Endothelial cell of umbilical vein (primary cell): ENCODE measurements at regions of chr11 and their contacts with region 1.

Region 1: DNA sequence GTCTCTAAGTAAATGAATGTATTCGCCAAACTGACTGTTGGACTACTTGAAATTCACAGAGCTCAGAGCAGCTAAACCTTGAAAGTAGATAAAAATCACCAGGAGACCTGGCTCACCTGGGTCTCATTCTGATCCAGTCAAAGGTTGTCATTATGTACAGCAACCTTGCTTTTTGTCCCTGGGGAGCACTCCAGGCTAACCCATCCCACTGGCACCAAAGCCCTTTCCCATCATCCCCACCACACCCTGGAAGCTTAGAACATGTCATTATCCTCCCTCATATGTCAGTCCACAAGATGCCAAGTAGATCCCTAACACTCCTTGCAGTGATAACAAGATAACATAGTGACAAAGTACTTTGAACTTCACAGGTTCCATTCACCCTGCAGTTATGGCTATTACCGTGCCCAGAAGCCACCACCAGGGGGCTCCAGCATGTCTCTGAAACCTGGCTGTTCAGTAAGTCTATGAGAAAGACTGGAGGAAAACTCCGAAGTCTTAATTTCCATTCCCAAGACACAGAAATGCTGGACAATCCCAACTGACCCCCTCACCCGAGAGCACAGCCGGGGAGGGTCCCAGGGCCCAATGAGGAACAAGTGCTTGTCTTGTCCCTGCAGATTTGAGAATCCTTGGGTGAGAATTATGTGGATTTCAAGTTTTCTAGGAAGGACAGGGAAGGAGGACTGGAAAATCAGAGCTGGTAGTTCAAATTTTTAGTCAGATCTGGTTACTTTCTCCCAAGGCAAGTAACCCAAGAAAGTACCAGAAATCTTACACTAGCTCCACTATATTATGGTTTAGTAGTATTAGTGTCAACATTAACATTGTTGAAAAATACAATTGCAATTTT is 43.0 kb upstream of the USP47 start:
- DNase-seq: peak; percentile 76
- H3K4me3 ChIP-seq: no peak overlapping the region
- H3K27ac ChIP-seq: no peak overlapping the region
- H3K4me1 ChIP-seq: no peaks in the 10 kb centered on the region
- H3K27me3 ChIP-seq: peaks cover 24 to 28% of the 10 kb centered on the region in 2 experiments
- CTCF ChIP-seq: peak; percentile 86 to 87
- POLR2A ChIP-seq: no peak

Region 2: GRCh38 chr11:11841723-11842420 is 43.1 kb after region 1 on chr11 and contains the start of gene USP47:
- CTCF ChIA-PET with region 1: interaction called, 5 read pairs
- POLR2A ChIA-PET with region 1: no interaction called
- dilution Hi-C with region 1: no loop called
- intact Hi-C with region 1: loop called (anchors 1 kb)
- DNase-seq: peak; percentile 87
- H3K4me3 ChIP-seq: peak within 1 kb of the TSS; percentile 81 to 97 (median 86)
- H3K27ac ChIP-seq: peak within 1 kb of the TSS; percentile 95
- H3K4me1 ChIP-seq: peaks cover 22% of the 10 kb centered on the region
- H3K27me3 ChIP-seq: no peaks in the 10 kb centered on the region
- CTCF ChIP-seq: peak; percentile 44 to 55
- POLR2A ChIP-seq: peak; percentile 97
- total RNA-seq, gene USP47: 38.0 and 41.5 TPM in 2 replicates

Region 3: GRCh38 chr11:11848891-11849746 is 50.3 kb after region 1 on chr11:
- CTCF ChIA-PET with region 1: interaction called, 7 read pairs
- POLR2A ChIA-PET with region 1: interaction called, 3 read pairs
- dilution Hi-C with region 1: no loop called
- intact Hi-C with region 1: loop called (anchors 1 kb)
- DNase-seq: peak; percentile 64
- H3K4me3 ChIP-seq: no peak overlapping the region
- H3K27ac ChIP-seq: no peak overlapping the region
- H3K4me1 ChIP-seq: peaks cover 13% of the 10 kb centered on the region
- H3K27me3 ChIP-seq: no peaks in the 10 kb centered on the region
- CTCF ChIP-seq: peak; percentile 58 to 75
- POLR2A ChIP-seq: no peak

Region 4: DNA sequence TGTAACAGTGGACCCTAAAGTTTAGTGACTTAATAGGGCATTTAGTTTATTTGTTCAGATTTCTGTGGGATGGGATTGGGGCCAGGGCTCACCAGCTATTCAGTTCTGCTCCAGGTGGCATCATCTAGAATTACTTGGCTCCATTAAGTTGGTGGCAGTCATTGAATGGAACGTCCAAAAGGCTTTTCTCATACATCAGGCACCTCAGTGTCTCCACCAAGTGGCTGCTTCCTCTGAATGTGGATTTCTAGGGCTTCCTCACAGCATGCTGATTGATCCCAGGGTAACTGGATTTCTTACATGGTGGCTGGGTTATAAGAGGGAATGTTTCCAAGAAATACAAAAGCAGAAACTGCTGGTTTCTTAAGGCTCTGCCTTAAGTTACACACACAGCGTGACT is 77.6 kb after region 1 on chr11:
- CTCF ChIA-PET with region 1: interaction called, 11 read pairs
- POLR2A ChIA-PET with region 1: no interaction called
- dilution Hi-C with region 1: no loop called
- intact Hi-C with region 1: no loop called
- DNase-seq: no peak
- H3K4me3 ChIP-seq: no peak overlapping the region
- H3K27ac ChIP-seq: no peak overlapping the region
- H3K4me1 ChIP-seq: no peaks in the 10 kb centered on the region
- H3K27me3 ChIP-seq: no peaks in the 10 kb centered on the region
- CTCF ChIP-seq: peak; percentile 5 to 10
- POLR2A ChIP-seq: no peak

Region 5: DNA sequence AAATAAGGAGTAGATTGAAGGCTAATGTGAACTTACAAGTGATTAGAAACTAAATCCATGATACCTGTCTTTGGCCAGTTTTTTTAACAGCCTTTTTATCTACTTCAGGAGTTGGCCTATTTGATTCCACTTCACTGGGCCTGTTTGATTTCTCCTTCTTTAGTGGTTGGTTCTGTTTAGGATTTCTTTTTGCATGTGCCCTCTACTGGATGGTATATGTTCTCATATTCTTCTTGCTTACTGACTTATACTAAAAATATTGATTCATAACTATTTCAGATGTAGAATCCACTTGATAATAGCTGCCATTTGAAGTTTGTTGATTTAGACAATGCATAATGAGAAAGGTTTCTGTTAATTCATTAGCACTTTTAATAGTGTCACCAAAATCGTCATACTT is 96.9 kb after region 1 on chr11:
- CTCF ChIA-PET with region 1: interaction called, 6 read pairs
- POLR2A ChIA-PET with region 1: no interaction called
- dilution Hi-C with region 1: no loop called
- intact Hi-C with region 1: loop called (anchors 5 kb)
- DNase-seq: peak; percentile 15
- H3K4me3 ChIP-seq: no peak overlapping the region
- H3K27ac ChIP-seq: no peak overlapping the region
- H3K4me1 ChIP-seq: no peaks in the 10 kb centered on the region
- H3K27me3 ChIP-seq: no peaks in the 10 kb centered on the region
- CTCF ChIP-seq: no peak
- POLR2A ChIP-seq: no peak

Region 6: DNA sequence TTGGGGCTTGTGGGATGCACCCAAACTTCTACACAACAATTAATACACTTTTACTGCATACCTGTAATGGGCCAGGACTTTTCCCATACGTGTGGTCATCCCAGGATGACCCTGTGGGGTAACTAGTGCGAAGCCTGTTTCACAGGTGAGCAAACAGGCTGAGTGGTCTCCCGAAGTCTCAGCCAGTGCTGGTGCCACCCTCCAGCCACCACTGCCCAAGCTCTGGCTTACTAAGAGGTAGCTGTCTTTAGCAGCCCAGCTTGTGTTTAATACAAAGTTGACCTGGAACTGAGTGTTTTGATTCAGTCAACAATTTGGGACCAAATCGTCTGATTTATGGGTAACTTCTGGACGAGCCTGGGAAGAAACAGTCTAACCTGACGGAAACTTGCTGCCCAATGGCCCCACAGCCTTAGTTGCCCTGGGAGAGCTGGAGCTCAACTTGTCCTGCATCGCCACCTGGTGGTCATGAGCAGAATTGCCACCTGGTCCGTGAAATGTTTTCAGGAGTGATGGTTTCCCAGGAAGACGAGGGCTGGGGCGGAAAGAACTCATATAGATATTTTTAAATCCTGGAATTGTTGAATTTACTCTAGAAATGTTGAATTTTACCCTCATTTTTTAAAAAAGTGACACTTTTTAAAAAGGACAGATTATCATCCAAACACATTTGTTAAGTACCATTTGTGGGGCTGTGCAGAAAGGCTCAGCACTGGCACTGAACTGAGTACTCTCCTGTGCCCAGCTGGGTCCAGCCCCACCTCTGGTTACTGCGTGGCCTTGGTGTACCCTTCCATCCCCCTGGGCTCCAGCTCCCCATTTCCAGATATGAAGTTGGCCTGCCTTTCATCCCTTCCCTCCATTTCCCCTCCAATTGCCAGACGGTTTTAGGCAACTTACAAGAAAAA is 483.0 kb after region 1 on chr11:
- CTCF ChIA-PET with region 1: interaction called, 27 read pairs
- POLR2A ChIA-PET with region 1: no interaction called
- dilution Hi-C with region 1: no loop called
- intact Hi-C with region 1: loop called (anchors 1 kb)
- DNase-seq: peak; percentile 81
- H3K4me3 ChIP-seq: no peak overlapping the region
- H3K27ac ChIP-seq: no peak overlapping the region
- H3K4me1 ChIP-seq: peaks cover 27% of the 10 kb centered on the region
- H3K27me3 ChIP-seq: no peaks in the 10 kb centered on the region
- CTCF ChIP-seq: peak; percentile 82 to 91
- POLR2A ChIP-seq: no peak